ENCODE measurements at regions of chr1 and their contacts with region 1.

Region 1: GRCh38 chr1:22889213-22889827 is 83.3 kb downstream of the LACTBL1 start:
- DNase-seq: peak in 4 of 7 donors; percentile 23 to 58 (median 32)
- H3K4me3 ChIP-seq: no peak overlapping the region
- H3K27ac ChIP-seq: no peak overlapping the region
- H3K4me1 ChIP-seq: no peaks in the 10 kb centered on the region
- H3K27me3 ChIP-seq: no peaks in the 10 kb centered on the region
- CTCF ChIP-seq: peak; percentile 69 to 86 (median 78)
- POLR2A ChIP-seq: no peak

Region 2: DNA sequence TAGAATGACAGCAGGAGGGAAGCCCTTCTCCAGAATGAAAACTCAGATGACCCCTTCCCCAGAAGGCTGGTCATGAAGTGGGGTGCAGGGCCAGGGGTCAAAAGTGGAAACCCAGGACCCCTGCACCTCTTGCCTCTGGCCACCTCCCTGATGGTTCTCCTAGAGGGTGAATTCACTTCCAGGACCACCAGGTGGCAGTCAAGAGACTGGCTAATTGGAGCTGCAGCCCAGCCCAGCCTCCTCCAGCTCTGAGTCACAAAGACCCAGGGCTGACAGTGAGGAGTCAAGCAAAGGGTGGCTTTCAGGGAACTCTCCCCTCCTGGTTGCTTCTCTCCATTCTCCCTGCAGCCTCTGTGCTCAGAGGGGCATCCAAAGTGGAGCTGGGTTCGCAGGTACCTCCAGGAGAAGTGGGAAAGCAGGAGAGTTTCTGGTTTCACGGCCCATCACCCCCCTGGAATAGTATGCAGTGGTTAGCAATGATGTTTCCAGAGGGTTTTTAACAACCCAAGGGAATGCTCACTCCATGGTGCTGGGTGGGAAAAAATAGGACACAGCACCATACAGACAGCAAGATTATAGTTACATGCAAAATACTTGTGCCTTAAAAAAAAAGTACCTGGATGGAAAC is 184.8 kb before region 1 on chr1:
- intact Hi-C with region 1: loop called in 1 of 2 experiments (anchors 5 kb)
- DNase-seq: peak; percentile 88 to 96 (median 93)
- H3K4me3 ChIP-seq: no peak overlapping the region
- H3K27ac ChIP-seq: no peak overlapping the region
- H3K4me1 ChIP-seq: no peaks in the 10 kb centered on the region
- H3K27me3 ChIP-seq: no peaks in the 10 kb centered on the region
- CTCF ChIP-seq: peak; percentile 75 to 95 (median 90)
- POLR2A ChIP-seq: no peak

Region 3: GRCh38 chr1:22709891-22710700 is 179.2 kb before region 1 on chr1:
- intact Hi-C with region 1: loop called in 1 of 2 experiments (anchors 5 kb)
- DNase-seq: peak; percentile 52 to 76 (median 72)
- H3K4me3 ChIP-seq: peak overlapping the region in 1 of 4 donors; percentile 46
- H3K27ac ChIP-seq: peak overlapping the region in 1 of 5 donors; percentile 83
- H3K4me1 ChIP-seq: peaks cover 3 to 12% of the 10 kb centered on the region in 2 donors
- H3K27me3 ChIP-seq: no peaks in the 10 kb centered on the region
- CTCF ChIP-seq: no peak
- POLR2A ChIP-seq: peak in 1 of 2 donors; percentile 23

Region 4: DNA sequence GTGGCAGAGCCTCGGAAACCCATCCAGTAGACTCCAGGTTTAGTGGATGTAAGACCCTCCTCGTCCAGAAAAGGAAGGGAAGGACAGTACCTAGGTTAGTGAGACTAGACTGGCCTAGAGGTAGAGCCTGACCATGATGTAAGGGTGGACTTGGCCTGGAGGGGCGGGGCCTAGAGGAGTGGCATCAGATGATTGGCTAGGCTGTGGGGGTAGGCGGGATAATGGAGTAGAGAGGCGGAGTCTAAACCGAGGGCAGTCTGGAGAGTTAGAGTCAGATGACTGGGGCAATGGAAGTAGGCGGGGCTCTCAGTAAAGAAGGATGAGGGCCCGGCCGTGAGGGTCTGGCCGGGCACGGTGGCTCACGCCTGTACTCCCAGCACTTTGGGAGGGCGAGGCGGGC is 108.6 kb before region 1 on chr1:
- intact Hi-C with region 1: no loop called
- DNase-seq: peak in 3 of 7 donors; percentile 19 to 30 (median 30)
- H3K4me3 ChIP-seq: no peak overlapping the region
- H3K27ac ChIP-seq: no peak overlapping the region
- H3K4me1 ChIP-seq: no peaks in the 10 kb centered on the region
- H3K27me3 ChIP-seq: no peaks in the 10 kb centered on the region
- CTCF ChIP-seq: no peak
- POLR2A ChIP-seq: no peak

Measured in adrenal gland (tissue), 19 donors.